PC-9 (cell line): ENCODE measurements at regions of chr18 and their contacts with region 1.

Region 1: GRCh38 chr18:3281456-3282400 is 19.8 kb downstream of the MYL12B start:
- DNase-seq: peak in 1 of 2 experiments; percentile 75
- H3K4me3 ChIP-seq: no peak overlapping the region
- H3K27ac ChIP-seq: peak overlapping the region; percentile 23; the same call in 1 of the 2 replicates
- H3K4me1 ChIP-seq: peaks cover 24% of the 10 kb centered on the region
- H3K27me3 ChIP-seq: no peaks in the 10 kb centered on the region
- CTCF ChIP-seq: peak; percentile 85

Region 2: GRCh38 chr18:2758309-2758708 is 523.4 kb before region 1 on chr18:
- CTCF ChIA-PET with region 1: no interaction called
- POLR2A ChIA-PET with region 1: no interaction called
- intact Hi-C with region 1: no loop called
- DNase-seq: no peak
- H3K4me3 ChIP-seq: no peak overlapping the region
- H3K27ac ChIP-seq: no peak overlapping the region
- H3K4me1 ChIP-seq: no peaks in the 10 kb centered on the region
- H3K27me3 ChIP-seq: no peaks in the 10 kb centered on the region
- CTCF ChIP-seq: no peak

Region 3: DNA sequence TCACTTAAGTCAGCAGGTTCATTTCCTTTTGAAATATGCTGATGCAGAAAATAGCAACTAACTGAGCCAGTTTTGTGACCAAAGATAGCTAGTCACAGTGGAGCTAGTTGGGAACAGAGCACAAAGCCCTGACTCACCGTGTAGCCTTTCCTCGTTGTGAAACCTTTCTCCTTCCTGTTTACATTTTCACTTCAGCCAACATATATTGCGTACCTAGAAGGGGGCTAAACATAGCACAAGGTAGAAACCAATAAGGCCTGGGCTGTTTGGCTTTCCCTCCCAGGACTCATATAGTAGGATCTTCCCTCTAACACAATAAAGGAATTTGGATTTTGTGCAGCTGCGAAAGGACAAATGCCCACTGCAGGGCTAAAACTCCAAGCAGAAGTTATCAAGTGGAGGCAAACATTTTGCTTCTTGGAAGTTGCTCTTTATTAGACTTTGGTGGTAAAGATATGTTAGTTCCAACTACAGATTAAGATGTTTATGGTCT is 244.3 kb before region 1 on chr18:
- CTCF ChIA-PET with region 1: no interaction called
- POLR2A ChIA-PET with region 1: interaction called, 26 read pairs
- intact Hi-C with region 1: no loop called
- DNase-seq: peak; percentile 65 to 95
- H3K4me3 ChIP-seq: no peak overlapping the region
- H3K27ac ChIP-seq: peak overlapping the region; percentile 91
- H3K4me1 ChIP-seq: peaks cover 22% of the 10 kb centered on the region
- H3K27me3 ChIP-seq: no peaks in the 10 kb centered on the region
- CTCF ChIP-seq: no peak

Region 4: DNA sequence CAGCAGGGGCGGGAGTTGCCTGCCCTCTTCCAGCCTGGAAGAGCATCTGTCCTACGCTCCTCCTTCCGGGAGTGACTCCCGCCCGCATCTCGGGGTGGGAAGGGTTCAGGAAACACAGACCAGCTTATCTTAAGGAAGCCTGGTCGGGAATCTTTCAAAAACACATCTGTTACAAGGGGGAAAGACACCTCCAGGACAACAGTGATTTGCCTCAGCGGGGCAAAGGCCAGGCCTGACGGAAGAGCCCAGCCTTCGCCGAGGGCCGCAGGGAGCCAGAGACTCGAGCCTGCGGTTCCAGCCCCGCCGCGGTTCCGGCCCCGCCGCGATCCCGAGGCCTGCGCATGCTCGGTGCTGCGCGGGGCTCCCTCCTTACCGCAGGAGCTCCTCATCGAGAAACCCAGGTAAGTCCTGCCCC is 130.1 kb after region 1 on chr18:
- CTCF ChIA-PET with region 1: no interaction called
- POLR2A ChIA-PET with region 1: interaction called, 8 read pairs
- intact Hi-C with region 1: loop called (anchors 1 kb)
- DNase-seq: peak; percentile 72 to 86
- H3K4me3 ChIP-seq: peak overlapping the region; percentile 68
- H3K27ac ChIP-seq: peak overlapping the region; percentile 96
- H3K4me1 ChIP-seq: peaks cover 58% of the 10 kb centered on the region
- H3K27me3 ChIP-seq: no peaks in the 10 kb centered on the region
- CTCF ChIP-seq: no peak

Region 5: GRCh38 chr18:3604498-3605408 is 323.0 kb after region 1 on chr18:
- CTCF ChIA-PET with region 1: no interaction called
- POLR2A ChIA-PET with region 1: interaction called, 11 read pairs
- intact Hi-C with region 1: no loop called
- DNase-seq: peak in 1 of 2 experiments; percentile 97
- H3K4me3 ChIP-seq: peak overlapping the region; percentile 72
- H3K27ac ChIP-seq: peak overlapping the region; percentile 100
- H3K4me1 ChIP-seq: peaks cover 32% of the 10 kb centered on the region
- H3K27me3 ChIP-seq: no peaks in the 10 kb centered on the region
- CTCF ChIP-seq: no peak

Region 6: DNA sequence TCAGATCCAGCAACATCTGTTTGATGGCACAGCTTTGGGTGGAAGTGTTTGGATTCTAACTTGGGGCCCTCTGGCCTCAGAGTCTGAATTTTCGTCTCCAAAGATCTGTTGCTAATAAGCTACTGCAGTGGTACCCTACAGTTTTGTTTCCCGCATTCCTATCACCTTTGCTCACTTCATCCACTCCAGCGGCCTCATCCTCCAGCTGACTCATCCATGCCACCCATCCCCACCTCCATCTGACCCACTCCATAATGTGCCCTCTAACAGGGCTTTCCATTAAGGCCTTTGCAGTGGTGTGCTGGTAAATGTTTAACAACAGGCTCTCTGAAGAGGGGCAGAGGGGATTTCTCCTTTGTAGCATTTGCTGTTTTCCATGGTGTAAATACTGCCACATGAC is 393.7 kb after region 1 on chr18:
- CTCF ChIA-PET with region 1: interaction called, 16 read pairs
- POLR2A ChIA-PET with region 1: no interaction called
- intact Hi-C with region 1: no loop called
- DNase-seq: peak; percentile 58 to 66
- H3K4me3 ChIP-seq: no peak overlapping the region
- H3K27ac ChIP-seq: no peak overlapping the region
- H3K4me1 ChIP-seq: peaks cover 9% of the 10 kb centered on the region
- H3K27me3 ChIP-seq: no peaks in the 10 kb centered on the region
- CTCF ChIP-seq: no peak

Region 7: DNA sequence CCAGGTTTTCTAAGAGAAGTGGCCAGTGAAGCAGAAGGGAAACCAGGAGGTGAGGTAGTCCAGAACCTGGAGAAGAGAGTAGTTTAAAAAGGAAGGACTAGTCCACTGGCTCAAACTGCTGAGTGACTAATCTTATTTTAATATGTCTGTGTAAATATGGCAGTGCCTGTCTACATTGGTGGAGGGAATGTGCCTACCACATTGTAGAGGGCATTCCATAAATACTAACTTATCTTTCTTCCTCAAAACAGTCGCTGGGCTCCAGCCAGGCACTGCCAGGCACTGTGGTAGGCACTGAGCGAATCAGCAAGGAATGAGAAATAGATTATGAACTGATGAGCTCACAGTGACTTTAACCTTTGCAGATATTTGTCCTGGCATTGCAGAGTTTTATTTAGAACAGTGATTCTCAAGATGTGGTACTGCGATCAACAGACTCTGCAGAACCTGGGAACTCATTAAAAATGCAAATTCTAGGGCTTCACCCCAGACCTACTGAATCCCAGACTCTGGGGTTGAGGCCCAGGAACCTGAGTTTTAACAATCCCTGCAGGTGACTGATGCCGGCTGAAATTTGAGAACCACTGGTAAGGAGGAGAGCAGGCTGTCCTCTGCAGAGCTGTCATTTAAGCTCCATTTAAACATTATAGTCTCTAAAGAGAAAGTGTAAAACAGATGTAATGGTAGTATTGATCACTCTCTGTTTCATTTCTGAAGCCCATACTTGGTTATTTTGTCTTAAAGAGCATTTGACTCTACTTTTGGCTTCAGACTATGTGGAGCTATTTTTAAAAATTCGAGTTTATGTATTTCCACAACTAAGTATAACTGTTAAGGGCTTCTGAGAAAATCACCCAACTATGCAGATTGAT is 685.5 kb after region 1 on chr18:
- CTCF ChIA-PET with region 1: interaction called, 10 read pairs
- POLR2A ChIA-PET with region 1: no interaction called
- intact Hi-C with region 1: no loop called
- DNase-seq: peak in 1 of 2 experiments; percentile 41
- H3K4me3 ChIP-seq: no peak overlapping the region
- H3K27ac ChIP-seq: no peak overlapping the region
- H3K4me1 ChIP-seq: peaks cover 12% of the 10 kb centered on the region
- H3K27me3 ChIP-seq: no peaks in the 10 kb centered on the region
- CTCF ChIP-seq: no peak